ENCODE measurements at regions of chr5 and their contacts with region 1.

Region 1: DNA sequence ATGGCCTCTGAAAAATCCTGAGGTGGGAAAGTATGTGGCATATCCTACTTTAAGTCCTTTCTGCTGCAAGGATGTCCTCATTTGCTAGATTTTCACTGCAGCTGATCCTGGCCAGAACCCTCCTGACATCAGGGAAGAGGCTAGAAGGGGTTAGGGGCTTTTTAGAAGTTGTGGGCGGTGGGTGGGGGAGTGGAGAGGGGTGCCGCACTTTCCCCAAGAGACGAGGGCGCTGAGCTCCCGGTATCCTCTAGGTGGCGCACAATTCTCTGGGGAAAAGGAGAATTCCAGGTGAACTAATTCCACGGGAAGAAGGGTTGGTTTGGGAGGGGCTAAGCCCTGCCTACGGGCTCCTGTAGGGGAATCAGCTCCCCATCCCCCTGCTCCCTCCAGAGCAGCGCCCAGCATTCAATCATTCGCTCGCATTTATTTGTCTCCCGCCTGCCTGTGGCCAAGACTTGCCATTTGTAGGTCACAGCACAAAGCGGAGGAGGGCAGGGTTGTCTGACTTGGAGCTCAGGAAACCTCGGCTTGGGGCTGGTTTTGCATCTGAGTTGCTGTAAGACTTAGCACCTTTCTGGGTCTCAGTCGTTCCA is 42.9 kb upstream of the HAND1 start:
- H3K4me3 ChIP-seq: no peak overlapping the region
- H3K27ac ChIP-seq: no peak overlapping the region
- H3K4me1 ChIP-seq: peaks cover 4% of the 10 kb centered on the region; the same call in 1 of the 2 replicates
- CTCF ChIP-seq: peak; percentile 65

Region 2: DNA sequence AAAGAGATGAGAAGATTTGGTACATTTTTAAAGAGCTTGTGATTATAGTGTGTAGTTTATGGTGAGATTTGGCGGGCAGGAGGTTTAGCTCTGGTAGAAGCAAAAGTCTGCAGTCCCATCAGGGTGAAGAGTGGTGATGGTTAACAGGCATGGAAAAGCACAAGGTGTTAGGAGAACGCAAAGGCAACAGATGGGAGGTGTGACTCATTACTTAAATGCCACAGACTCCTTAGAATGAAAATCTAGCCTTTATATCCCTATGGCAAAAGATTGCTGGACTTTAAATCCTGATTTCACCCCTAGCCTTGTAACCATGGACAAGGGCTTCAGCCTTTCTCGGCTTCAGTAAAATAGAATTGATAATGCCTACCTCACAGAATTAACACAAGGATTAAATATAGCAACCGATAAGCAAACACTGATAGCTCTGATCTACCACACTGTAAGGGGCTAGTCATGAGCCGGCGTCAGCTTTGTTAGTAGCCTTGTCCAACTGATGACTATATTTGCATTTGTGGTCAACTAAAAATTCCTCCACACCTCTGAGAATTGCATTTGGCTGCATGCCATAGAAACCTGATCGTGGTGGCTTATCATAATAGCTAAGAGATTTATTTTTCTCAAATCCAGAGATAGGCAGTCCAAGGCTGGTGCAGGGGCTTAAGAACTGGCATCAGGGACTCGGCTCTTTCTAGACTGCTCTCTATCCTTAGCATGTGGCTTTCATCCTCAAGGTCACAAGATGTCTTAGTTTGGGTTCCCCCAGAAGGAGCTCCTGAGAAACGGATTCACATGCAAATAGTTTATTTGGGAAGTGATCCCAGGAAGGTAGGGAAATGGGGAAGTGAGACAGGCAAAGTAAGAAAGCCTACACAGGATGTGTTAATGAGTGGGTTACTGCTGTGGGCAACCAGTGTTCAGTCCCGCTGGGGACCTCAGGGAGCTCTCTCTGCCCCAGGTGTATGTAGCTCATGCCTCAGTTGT is 462.6 kb before region 1 on chr5:
- CTCF ChIA-PET with region 1: no interaction called
- POLR2A ChIA-PET with region 1: no interaction called
- H3K4me3 ChIP-seq: no peak overlapping the region
- H3K27ac ChIP-seq: no peak overlapping the region
- H3K4me1 ChIP-seq: peaks cover 19% of the 10 kb centered on the region
- CTCF ChIP-seq: no peak

Region 3: DNA sequence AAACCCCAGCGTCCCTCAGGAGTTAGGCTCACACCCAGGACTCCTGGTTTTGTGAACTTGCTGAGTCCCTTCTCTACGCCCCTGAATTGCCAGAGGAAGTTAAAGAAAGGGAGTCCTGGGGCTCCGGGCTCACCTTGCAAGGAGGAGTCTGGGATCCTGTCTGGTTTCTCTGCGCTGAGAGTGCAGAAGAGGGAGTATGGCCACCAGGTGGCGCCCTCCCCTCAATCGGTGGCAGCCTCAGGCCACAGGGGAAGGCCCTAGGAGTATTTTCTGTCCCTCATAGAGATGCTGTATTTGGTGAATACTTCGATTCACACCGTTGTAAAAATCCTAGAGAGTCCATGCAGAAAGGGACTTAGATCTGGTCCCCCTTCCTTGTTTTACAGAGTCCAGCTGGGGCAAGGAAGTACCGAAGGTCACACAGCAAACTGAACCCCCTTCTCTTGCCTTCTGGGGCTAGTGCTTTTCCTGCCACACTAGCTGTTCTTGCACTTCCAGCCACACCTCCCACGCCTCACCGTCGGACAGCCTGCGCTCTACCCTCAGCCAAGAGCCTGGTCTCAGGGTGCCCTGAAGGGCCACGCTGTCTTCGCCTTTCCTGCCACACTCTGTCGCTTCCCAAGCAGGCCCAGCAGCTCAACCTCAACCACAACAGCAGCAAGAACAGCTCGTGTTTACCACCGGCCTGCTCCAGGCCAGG is 53.2 kb before region 1 on chr5:
- CTCF ChIA-PET with region 1: interaction called, 29 read pairs
- POLR2A ChIA-PET with region 1: no interaction called
- H3K4me3 ChIP-seq: no peak overlapping the region
- H3K27ac ChIP-seq: no peak overlapping the region
- H3K4me1 ChIP-seq: peaks cover 12% of the 10 kb centered on the region
- CTCF ChIP-seq: peak; percentile 82

Region 4: DNA sequence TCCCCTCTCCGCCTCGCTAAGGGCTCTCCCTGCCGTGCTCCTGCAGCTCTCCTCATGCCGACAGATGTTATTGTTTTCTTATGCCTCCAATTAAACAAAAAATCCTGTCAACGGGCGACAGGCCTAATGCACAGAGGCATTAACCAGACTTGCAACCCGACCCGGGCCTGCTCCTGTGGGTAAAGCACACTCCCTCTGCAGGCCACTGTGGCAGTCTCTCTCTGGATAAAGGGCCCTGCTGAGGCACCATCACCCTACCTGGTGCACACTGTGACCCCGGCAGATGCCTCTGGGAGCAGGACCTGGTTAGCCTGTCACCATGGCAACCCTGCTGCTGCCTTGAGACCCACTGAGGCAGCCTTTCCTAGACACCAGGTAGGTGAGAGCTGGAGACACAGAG is 15.3 kb before region 1 on chr5:
- CTCF ChIA-PET with region 1: interaction called, 27 read pairs
- POLR2A ChIA-PET with region 1: no interaction called
- H3K4me3 ChIP-seq: no peak overlapping the region
- H3K27ac ChIP-seq: no peak overlapping the region
- H3K4me1 ChIP-seq: no peaks in the 10 kb centered on the region
- CTCF ChIP-seq: 0 out of 2 replicates have a peak, but pooled peaks have one; percentile 11

Region 5: DNA sequence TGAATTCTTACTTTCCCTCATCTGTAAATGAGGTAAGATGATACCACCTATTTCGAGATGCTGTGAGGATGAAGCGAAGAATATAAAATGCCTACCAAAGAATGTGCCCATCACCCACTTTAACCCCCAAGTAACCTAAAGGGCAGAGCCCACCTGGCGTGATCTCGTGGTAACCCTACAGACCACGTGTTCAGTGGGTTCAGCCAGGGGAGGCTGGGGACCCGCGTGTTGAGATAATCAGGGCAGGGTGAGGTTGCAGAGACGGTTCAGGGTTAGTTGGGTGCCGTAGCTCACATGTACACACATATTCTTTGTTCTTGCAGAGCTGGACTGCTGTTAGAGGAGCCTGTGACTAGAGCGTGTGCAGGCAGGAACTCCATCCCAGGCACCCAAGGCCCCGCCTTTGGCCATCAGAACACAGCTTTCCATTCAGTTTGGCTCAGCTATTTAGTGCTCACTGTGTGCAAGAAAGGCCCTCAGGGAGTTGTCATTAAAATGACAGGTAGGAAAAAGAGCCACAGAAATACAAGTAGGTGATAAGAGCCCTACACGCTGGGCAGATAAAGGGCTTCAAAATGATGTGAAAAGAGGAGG is 13.6 kb after region 1 on chr5:
- CTCF ChIA-PET with region 1: interaction called, 17 read pairs
- POLR2A ChIA-PET with region 1: no interaction called
- H3K4me3 ChIP-seq: no peak overlapping the region
- H3K27ac ChIP-seq: no peak overlapping the region
- H3K4me1 ChIP-seq: no peaks in the 10 kb centered on the region
- CTCF ChIP-seq: no peak

Region 6: DNA sequence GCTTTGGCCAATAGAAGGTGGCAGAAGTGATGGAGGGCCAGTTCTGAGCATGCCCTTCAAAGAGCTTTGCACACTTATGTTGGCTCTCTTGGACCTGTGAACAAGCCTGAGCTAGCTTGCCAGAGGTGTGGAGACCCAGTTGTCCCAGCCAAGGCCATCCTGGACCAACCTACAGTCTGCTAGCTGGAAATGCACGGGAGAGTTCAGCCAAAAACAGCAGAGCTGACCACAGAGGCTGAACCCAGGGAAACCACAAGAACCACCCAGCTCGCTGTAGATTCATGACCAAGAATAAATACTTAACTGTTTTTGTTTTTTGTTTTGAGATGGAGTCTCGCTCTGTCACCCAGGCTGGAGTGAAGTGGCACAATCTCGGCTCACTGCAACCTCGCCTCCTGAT is 22.4 kb after region 1 on chr5:
- CTCF ChIA-PET with region 1: interaction called, 14 read pairs
- POLR2A ChIA-PET with region 1: no interaction called
- H3K4me3 ChIP-seq: no peak overlapping the region
- H3K27ac ChIP-seq: no peak overlapping the region
- H3K4me1 ChIP-seq: no peaks in the 10 kb centered on the region; the same call in 1 of the 2 replicates
- CTCF ChIP-seq: no peak

Region 7: GRCh38 chr5:154587123-154588026 is 66.4 kb after region 1 on chr5:
- CTCF ChIA-PET with region 1: interaction called, 15 read pairs
- POLR2A ChIA-PET with region 1: interaction called, 3 read pairs
- H3K4me3 ChIP-seq: no peak overlapping the region
- H3K27ac ChIP-seq: no peak overlapping the region
- H3K4me1 ChIP-seq: peaks cover 6% of the 10 kb centered on the region; the same call in 1 of the 2 replicates
- CTCF ChIP-seq: no peak

Region 8: GRCh38 chr5:154603978-154604679 is 83.2 kb after region 1 on chr5:
- CTCF ChIA-PET with region 1: interaction called, 11 read pairs
- POLR2A ChIA-PET with region 1: no interaction called
- H3K4me3 ChIP-seq: no peak overlapping the region
- H3K27ac ChIP-seq: no peak overlapping the region
- H3K4me1 ChIP-seq: no peaks in the 10 kb centered on the region
- CTCF ChIP-seq: no peak

Region 9: DNA sequence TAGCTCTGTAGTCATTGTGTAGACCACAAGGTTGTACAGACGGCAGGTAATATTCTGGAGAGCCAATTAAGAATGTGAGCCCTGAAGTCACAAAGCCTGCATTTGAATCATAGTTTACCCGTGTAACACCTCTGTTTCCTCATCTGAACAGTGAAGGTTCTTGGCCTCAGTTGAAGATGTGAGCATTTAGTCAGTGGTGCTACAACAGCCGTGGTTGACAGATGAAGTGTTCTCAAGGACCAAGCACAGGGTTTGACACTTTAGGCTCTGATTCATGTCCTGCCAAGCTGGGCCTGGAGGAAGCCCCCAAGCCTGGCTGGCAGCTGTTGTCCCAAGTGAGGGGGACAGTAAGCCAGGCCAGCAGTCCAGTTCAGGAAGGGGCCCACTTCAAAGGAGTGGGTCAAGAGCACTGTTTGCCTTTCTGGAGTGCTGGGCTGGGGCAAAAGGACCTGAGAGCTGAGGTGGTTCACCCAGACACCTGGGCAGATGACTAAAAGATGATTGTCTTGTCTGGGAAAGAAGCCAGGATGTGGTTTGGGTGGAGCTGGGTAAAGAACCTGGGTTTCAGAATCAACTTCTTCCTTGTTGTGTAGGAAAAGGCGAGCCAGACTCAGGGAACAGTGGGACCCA is 308.7 kb after region 1 on chr5:
- CTCF ChIA-PET with region 1: no interaction called
- POLR2A ChIA-PET with region 1: no interaction called
- H3K4me3 ChIP-seq: no peak overlapping the region
- H3K27ac ChIP-seq: no peak overlapping the region
- H3K4me1 ChIP-seq: peaks cover 7% of the 10 kb centered on the region; the same call in 1 of the 2 replicates
- CTCF ChIP-seq: no peak

Measured in HEK293 (cell line).